Aorta (tissue), 5 donors: ENCODE measurements at regions of chr9 and their contacts with region 1.

Region 1: DNA sequence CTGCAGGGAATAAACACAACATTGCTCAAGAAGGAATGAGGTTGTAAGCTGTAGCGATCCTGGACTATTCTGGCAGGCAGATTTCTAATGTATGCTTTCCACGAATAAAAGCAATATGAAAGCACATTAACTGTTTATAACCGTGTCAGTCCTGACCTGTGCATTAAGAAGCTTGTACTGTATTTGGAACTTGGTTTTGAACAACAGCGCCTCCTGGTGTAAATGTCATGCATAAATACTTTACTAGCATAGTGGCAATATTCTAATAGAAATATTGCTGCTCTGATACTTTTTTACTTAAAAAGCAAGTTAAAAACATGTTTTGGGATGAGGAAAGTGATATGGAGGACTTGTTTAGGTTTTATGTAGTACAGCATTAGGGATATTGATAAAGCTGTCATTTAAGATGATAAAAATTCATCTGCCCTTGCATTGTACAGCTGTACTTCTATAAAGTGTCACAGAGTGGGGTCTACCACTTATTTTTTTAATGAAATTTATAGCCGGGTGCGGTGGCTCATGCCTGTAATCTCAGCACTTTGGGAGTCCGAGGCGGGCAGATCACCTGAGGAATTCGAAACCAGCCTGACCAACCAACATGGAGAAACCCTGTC is 70.7 kb upstream of the GNE start:
- DNase-seq: no peak
- ATAC-seq: peak; percentile 60
- H3K4me3 ChIP-seq: no peak overlapping the region
- H3K27ac ChIP-seq: no peak overlapping the region
- H3K4me1 ChIP-seq: no peaks in the 10 kb centered on the region
- H3K27me3 ChIP-seq: no peaks in the 10 kb centered on the region

Region 2: GRCh38 chr9:36102742-36103495 is 226.0 kb before region 1 on chr9:
- intact Hi-C with region 1: loop called in 1 of 2 experiments (anchors 10 kb)
- DNase-seq: peak; percentile 91 to 94
- ATAC-seq: peak; percentile 93
- H3K4me3 ChIP-seq: no peak overlapping the region
- H3K27ac ChIP-seq: no peak overlapping the region
- H3K4me1 ChIP-seq: no peaks in the 10 kb centered on the region
- H3K27me3 ChIP-seq: no peaks in the 10 kb centered on the region

Region 3: DNA sequence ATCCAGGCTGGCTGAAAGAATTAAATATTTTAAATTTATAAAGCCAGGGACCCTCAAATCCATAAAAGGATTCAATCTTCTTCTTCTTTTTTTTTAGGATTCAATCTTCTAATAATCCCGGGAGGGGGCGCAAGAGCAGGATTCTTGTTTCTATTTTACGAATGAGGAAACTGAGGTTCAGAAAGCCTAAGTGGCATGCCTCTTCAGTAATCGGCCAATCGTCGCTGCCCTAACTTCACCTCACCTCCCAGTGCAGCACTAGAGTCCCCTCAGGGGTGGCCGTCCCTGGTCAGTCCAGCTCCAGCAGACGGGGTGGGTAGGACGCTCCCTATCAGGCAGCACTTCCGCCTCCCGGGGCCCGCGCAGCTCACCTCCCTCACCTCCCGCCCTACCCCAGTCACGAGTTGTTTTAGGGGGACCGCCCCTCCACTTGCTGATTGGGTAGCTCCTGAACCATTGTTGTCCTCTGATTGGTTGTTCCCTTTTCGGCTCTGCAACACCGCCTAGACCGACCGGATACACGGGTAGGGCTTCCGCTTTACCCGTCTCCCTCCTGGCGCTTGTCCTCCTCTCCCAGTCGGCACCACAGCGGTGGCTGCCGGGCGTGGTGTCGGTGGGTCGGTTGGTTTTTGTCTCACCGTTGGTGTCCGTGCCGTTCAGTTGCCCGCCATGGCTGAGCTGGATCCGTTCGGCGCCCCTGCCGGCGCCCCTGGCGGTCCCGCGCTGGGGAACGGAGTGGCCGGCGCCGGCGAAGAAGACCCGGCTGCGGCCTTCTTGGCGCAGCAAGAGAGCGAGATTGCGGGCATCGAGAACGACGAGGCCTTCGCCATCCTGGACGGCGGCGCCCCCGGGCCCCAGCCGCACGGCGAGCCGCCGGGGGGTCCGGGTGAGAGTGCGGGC is 138.3 kb before region 1 on chr9 and contains the start of gene CLTA:
- intact Hi-C with region 1: loop called in 1 of 2 experiments (anchors 5 kb)
- DNase-seq: peak; percentile 97
- ATAC-seq: peak; percentile 99
- H3K4me3 ChIP-seq: peak within 1 kb of the TSS; percentile 72 to 95
- H3K27ac ChIP-seq: peak within 1 kb of the TSS in 1 of 2 donors; percentile 87
- H3K4me1 ChIP-seq: peaks cover 1 to 11% of the 10 kb centered on the region in 2 donors
- H3K27me3 ChIP-seq: no peaks in the 10 kb centered on the region
- total RNA-seq, gene CLTA: 117 to 118 TPM

Region 4: DNA sequence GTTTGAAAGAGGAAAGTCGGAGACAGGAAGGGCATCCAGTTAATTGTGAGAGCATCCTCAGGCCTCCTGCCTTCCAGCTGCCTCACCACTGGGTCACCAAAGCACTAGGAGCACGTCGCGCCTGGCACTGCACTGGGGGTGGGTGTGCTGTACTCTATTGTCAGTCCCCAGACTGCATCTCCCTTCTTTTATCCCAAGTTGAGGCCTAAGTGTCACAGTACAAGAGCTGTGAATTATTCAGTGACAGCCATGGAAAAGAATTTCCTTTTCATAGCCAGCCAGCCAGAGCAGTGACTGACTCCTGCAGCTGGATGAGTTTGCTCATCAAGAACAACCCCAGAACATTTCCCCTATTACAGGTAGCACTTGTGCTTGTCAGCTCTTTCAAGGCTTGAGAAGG is 121.9 kb before region 1 on chr9:
- intact Hi-C with region 1: no loop called
- DNase-seq: no peak
- ATAC-seq: no peak
- H3K4me3 ChIP-seq: no peak overlapping the region
- H3K27ac ChIP-seq: peak overlapping the region in 1 of 2 donors; percentile 75
- H3K4me1 ChIP-seq: peaks cover 1 to 4% of the 10 kb centered on the region in 2 donors
- H3K27me3 ChIP-seq: no peaks in the 10 kb centered on the region

Region 5: GRCh38 chr9:36250079-36250478 is 78.8 kb before region 1 on chr9:
- intact Hi-C with region 1: loop called in 1 of 2 experiments (anchors 5 kb)
- DNase-seq: no peak
- ATAC-seq: no peak
- H3K4me3 ChIP-seq: no peak overlapping the region
- H3K27ac ChIP-seq: no peak overlapping the region
- H3K4me1 ChIP-seq: peaks cover 0 to 3% of the 10 kb centered on the region in 2 donors
- H3K27me3 ChIP-seq: no peaks in the 10 kb centered on the region